Heart left ventricle (tissue), 16 donors: ENCODE measurements at regions of chr10 and their contacts with region 1.

Region 1: DNA sequence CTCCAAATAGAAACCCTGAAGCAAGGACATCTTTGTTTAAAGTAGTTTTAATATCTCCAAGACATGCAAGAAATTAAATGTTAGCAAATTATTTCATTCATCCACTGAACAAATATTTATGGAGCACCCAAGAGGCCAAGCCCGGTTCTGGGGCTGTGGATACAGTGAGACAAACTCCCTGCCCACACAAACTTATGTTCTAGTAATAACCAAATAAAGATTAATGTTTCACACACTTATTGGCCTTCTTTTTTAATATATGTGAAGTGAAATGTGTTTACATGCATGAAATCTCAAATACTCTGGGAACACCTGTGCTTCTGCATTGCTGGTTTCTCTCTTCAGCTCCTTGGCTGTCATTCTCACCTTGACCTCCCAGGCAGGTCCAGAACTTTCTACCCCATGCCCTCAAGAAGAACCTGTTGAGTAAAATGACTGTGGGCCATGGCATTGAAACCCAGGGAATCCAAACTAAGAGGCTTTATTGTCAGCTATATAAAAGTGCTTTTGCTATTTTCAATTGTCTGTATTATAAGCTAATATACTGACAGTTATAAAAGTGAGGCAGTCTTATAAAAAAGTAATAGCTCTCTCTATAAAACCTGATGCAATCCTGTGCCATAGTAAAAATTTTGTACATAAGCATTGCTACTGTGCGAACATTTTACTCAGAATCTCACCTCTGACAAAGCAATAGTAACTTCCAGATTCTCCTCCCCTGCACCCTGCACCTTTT is 43.7 kb downstream of the SVIL start:
- DNase-seq: no peak
- ATAC-seq: no peak
- H3K4me3 ChIP-seq: no peak overlapping the region
- H3K27ac ChIP-seq: peak overlapping the region in 8 of 12 donors; percentile 34 to 89 (median 83)
- H3K4me1 ChIP-seq: peaks cover 0 to 92% (median 43%) of the 10 kb centered on the region in 12 donors
- H3K27me3 ChIP-seq: no peaks in the 10 kb centered on the region
- CTCF ChIP-seq: peak in 3 of 12 donors; percentile 11 to 36 (median 16)
- POLR2A ChIP-seq: no peak

Region 2: GRCh38 chr10:29517352-29517923 is 73.6 kb before region 1 on chr10:
- intact Hi-C with region 1: loop called in 2 of 10 experiments (anchors 5 to 10 kb)
- DNase-seq: no peak
- ATAC-seq: peak in 3 of 4 donors; percentile 3 to 39 (median 31)
- H3K4me3 ChIP-seq: no peak overlapping the region
- H3K27ac ChIP-seq: peak overlapping the region; percentile 2 to 90 (median 82)
- H3K4me1 ChIP-seq: peaks cover 0 to 38% (median 13%) of the 10 kb centered on the region in 12 donors
- H3K27me3 ChIP-seq: no peaks in the 10 kb centered on the region
- CTCF ChIP-seq: peak; percentile 21 to 60 (median 43)
- POLR2A ChIP-seq: no peak

Region 3: DNA sequence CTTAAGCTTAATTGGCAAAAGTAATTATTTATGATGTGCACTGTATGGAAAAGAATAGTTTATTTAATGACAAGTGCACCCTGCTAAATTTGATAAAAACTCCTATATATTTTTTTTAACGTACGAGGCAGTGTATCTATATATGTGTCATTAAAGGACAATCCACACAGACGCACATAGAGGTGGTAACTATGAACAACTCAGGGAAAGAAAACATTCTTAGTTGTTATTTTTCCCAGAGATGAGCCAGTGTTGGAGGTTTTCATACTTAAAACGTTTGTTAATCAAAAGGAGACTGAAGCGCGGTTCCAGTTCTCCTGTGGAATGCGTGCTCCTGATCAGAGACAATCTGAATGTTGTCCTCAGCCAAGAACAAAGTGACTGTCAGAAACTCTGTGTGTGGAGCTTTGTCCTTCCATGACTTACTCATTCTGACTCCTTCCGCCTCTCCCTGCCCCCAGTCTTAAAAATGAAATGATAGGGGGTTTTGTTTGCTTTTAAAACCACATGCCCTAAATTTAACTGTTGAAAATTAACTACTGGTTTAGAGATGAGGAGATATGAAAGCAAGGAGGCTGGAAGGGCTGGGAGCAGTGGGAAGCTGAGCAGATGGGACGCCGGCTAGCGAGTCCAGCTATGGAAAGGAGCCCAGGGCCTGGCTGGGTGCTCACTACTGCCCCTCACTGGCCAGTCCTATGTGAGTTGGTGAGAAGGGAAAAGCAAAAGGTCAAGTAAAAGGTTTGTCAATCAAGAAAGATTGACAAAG is 55.9 kb before region 1 on chr10:
- intact Hi-C with region 1: loop called in 1 of 10 experiments (anchors 5 kb)
- DNase-seq: peak in 4 of 5 donors; percentile 53 to 74 (median 59)
- ATAC-seq: peak; percentile 68 to 82 (median 72)
- H3K4me3 ChIP-seq: peak overlapping the region in 5 of 12 donors; percentile 6 to 30 (median 15)
- H3K27ac ChIP-seq: peak overlapping the region; percentile 61 to 87 (median 76)
- H3K4me1 ChIP-seq: peaks cover 0 to 55% (median 21%) of the 10 kb centered on the region in 12 donors
- H3K27me3 ChIP-seq: no peaks in the 10 kb centered on the region
- CTCF ChIP-seq: peak; percentile 36 to 72 (median 62)
- POLR2A ChIP-seq: no peak

Region 4: GRCh38 chr10:29635711-29636144 is 44.6 kb after region 1 on chr10:
- intact Hi-C with region 1: loop called in 4 of 10 experiments (anchors 5 kb)
- DNase-seq: no peak
- ATAC-seq: peak in 3 of 4 donors; percentile 26 to 39 (median 35)
- H3K4me3 ChIP-seq: peak overlapping the region in 6 of 12 donors; percentile 8 to 62 (median 36)
- H3K27ac ChIP-seq: peak overlapping the region; percentile 73 to 94 (median 88)
- H3K4me1 ChIP-seq: peaks cover 3 to 45% (median 20%) of the 10 kb centered on the region in 12 donors
- H3K27me3 ChIP-seq: no peaks in the 10 kb centered on the region
- CTCF ChIP-seq: no peak
- POLR2A ChIP-seq: no peak

Region 5: DNA sequence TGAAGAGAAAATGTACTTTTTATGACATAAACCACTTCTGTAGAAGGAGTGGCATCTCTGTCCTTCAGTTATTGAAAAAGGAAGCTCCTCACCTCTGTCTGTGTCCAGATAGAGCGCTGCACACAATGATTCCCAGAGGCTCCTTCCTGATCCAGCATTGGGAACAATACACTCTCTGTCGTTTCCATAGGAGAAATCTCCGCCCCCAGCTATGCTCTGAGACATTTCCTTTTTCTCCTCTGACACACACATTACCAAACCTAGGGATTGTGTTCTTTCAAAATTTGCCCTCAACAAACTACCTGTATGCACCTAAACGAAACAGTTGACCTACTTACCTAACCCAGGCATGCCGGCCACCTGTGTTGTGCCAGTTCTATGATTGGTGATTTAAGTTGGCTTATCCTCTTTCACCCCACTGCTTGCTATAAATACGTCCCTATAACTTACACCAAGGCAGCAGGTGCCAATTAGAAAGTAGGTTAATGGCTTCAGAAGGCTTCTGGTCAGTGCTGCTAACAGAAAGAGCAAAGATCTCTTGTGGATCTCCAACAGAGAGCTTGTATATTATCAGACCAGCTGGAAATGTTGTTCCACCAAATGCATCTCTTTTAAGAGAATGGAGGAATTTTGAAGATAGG is 608.4 kb after region 1 on chr10:
- intact Hi-C with region 1: no loop called
- DNase-seq: no peak
- ATAC-seq: no peak
- H3K4me3 ChIP-seq: no peak overlapping the region
- H3K27ac ChIP-seq: no peak overlapping the region
- H3K4me1 ChIP-seq: no peaks in the 10 kb centered on the region
- H3K27me3 ChIP-seq: peaks cover 0 to 4% (median 0%) of the 10 kb centered on the region in 9 donors
- CTCF ChIP-seq: no peak
- POLR2A ChIP-seq: no peak